Activated naive CD8-positive, alpha-beta T cell treated with anti-CD3 and anti-CD28 coated beads, Interleukin-2, amount 10 ng/mL, durations not matched to agents 7 days and 5 days (primary cell): ENCODE measurements at regions of chr7 and their contacts with region 1.

Region 1: DNA sequence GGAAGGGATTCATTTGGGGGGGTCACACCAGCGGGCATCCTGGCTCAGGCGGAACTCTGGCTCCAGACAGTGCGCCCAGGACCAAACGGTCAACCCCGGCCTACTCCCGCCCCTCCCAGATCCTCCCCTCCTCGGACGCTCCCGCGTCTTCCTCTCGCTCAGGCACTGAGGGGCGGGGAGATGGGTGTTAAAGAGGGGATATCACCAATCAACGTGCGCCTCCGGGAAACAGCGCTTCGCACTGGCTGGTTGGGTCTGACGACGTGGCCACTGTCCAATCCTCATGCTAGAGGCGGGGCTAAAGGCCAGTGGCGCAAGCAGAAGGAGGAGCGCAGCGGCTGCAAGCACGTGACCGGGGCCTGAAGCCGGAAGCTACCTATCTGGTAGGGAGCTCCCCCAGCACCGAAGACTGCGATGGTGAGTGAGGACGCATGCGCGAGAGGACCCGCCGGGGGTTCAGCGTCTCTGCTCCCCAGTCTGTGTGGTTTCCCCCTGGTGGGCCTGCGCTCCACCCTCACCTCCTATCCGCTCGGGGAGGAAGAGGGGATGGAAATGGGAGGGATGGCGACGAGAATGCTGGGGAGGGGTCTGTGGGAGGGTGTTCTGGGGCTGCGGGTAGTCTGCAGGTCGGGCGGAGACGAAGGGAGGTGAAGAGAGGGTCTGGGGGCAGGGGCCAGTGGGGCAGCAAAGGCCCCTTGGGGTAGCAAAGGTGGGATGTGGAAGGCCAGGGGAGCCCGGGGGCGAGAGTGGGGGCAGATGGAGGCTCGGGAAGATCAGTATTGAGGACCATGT is at the start of gene LAMTOR4:
- DNase-seq: peak; percentile 93
- ATAC-seq: peak; percentile 97
- H3K4me3 Mint-ChIP-seq: peak within 1 kb of the TSS; percentile 100
- H3K27ac Mint-ChIP-seq: peak within 1 kb of the TSS; percentile 99
- H3K4me1 Mint-ChIP-seq: peaks cover 31% of the 10 kb centered on the region
- H3K27me3 Mint-ChIP-seq: no peaks in the 10 kb centered on the region
- total RNA-seq, gene LAMTOR4: 170 to 175 TPM

Region 2: DNA sequence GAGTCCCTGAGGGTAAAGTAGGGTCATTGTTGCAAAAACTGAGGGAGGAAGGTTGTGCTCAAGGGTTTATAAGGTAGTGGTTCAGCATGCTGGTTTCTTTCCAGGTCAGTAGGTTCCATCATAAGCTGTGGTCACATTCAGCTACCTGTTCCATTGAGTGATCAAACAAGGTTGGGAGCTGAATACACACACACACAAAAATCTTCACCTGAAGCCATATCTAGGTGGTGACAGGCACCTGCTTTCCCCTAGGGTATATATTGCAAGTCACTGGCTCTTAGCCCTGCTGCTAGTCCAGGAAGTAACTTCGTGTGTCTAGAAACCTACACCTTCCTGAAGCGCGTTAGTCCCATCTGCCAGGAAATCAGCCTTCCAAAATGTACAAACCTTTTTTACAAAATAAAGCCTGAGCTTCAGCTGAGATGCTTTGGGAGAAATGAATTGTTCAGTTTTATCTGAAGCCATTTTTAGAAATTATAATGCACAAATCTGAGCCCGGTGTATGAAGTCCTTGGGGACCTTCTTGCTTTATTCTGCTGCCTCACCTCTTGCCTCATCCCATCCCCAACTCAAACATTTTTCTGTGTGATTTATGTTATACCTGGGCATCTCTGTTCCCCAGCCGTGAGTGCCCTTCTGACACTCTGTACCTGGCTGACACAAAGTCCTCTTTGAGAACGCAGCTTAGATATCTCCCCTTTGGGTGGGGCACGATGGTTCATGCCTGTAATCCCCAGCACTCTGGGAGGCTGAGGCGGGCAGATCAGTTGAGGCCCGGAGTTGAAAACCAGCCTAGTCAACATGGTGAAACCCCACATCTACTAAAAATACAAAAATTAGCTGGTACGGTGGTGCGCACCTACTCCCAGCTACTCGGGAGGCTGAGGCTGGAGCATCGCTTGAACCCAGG is 10.6 kb before region 1 on chr7:
- POLR2A ChIA-PET with region 1: interaction called, 24 read pairs
- DNase-seq: no peak
- ATAC-seq: peak; percentile 72
- H3K4me3 Mint-ChIP-seq: peak overlapping the region; percentile 66
- H3K27ac Mint-ChIP-seq: peak overlapping the region; percentile 83
- H3K4me1 Mint-ChIP-seq: peaks cover 14% of the 10 kb centered on the region
- H3K27me3 Mint-ChIP-seq: no peaks in the 10 kb centered on the region

Region 3: GRCh38 chr7:100167921-100168323 is 19.2 kb after region 1 on chr7:
- POLR2A ChIA-PET with region 1: interaction called, 19 read pairs
- DNase-seq: no peak
- ATAC-seq: no peak
- H3K4me3 Mint-ChIP-seq: peak overlapping the region; percentile 79
- H3K27ac Mint-ChIP-seq: peak overlapping the region; percentile 76
- H3K4me1 Mint-ChIP-seq: peaks cover 69% of the 10 kb centered on the region
- H3K27me3 Mint-ChIP-seq: peaks cover 5% of the 10 kb centered on the region

Region 4: DNA sequence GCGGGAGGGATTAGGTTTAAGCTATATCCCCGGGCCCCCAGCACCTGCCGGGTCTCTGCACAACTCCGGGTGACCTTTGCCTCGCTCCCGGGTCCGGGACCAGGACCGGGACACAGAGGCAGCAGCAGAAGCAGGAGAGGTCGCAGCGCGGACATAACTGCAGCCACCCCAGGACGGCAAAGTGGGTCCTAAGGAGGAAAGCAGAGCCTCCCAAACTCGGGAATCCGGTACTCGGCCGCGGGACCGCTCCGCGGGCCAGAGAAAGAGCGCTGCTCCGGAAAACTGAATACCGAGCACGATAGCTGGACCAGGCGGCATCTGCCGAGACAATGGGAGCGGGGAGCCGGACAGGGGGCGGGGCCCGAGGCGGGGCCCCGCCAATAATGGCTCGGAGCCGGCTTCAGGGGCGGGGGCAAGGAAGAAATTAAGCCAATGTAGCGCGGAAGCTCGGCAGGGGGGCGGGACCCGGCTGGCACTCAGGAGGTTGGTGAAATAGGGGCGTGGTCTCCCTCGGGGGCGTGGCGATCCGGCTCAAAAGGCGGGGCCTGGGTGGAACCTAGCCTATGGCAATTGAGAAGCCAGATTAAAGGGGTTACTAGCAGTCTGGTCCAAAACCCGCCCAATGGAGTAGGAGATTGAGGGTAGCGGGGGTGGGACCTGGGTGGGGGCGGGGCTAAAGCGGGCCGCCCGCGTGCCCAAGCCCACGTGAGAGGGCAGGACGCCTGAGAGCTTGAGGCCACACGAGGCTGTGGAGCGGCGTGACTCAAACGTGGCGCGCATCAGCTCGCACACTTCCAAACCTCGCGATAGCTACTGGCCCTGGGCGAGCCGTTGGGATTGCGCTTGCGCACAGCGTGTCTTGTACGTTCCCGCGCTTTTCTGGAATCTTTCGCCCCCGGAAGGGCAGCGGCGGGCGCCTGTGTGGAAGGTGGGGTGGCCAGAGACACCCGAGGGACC is 28.6 kb after region 1 on chr7 and contains the starts of genes GPC2 and STAG3:
- POLR2A ChIA-PET with region 1: interaction called, 17 read pairs
- DNase-seq: peak; percentile 99
- ATAC-seq: peak; percentile 86
- H3K4me3 Mint-ChIP-seq: peak within 1 kb of the TSS; percentile 80
- H3K27ac Mint-ChIP-seq: peak within 1 kb of the TSS; percentile 64
- H3K4me1 Mint-ChIP-seq: peaks cover 48% of the 10 kb centered on the region
- H3K27me3 Mint-ChIP-seq: peaks cover 3% of the 10 kb centered on the region
- total RNA-seq, gene GPC2: 12.6 to 13.0 TPM
- total RNA-seq, gene STAG3: 31.1 to 38.8 TPM